Activated T-helper 1 cell treated with anti-CD3 and anti-CD28 coated beads, Interleukin-12 subunit alpha, Interleukin-12 subunit beta, Interleukin-2, Interleukin-4 antibody, amounts not matched to agents 30 ng/mL and 10 ng/mL and 1 ng/mL, durations not matched to agents 14 hours and 24 hours and 36 hours (primary cell): ENCODE measurements at regions of chr5 and their contacts with region 1.

Region 1: GRCh38 chr5:16666883-16667398 is 50.1 kb upstream of the RETREG1 start:
- DNase-seq: no peak
- H3K4me3 Mint-ChIP-seq: no peak overlapping the region
- H3K27ac Mint-ChIP-seq: no peak overlapping the region
- H3K4me1 Mint-ChIP-seq: no peaks in the 10 kb centered on the region
- H3K27me3 Mint-ChIP-seq: peaks cover 3% of the 10 kb centered on the region

Region 2: DNA sequence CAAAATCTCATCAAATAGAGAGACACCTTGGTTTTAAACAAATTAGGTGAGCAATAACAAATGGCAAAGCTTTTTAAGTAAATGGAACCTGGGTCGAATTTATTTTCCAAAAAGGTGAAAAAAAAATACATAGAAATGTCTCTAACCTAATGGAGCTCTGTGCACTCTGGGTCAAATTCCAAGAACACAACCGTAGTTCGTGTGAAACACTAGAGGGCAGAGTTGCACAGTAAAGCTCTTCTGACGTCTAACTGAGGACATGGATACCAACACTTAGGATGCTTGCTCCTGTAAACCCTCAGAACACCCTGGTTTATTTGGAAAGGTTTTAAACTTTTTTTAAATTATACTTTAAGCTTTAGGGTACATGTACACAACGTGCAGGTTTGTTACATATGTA is 506.2 kb before region 1 on chr5:
- intact Hi-C with region 1: loop called (anchors 2 kb)
- DNase-seq: peak; percentile 10
- H3K4me3 Mint-ChIP-seq: no peak overlapping the region
- H3K27ac Mint-ChIP-seq: no peak overlapping the region
- H3K4me1 Mint-ChIP-seq: no peaks in the 10 kb centered on the region
- H3K27me3 Mint-ChIP-seq: no peaks in the 10 kb centered on the region

Region 3: GRCh38 chr5:16489322-16489791 is 177.6 kb before region 1 on chr5:
- intact Hi-C with region 1: loop called (anchors 1 kb)
- DNase-seq: no peak
- H3K4me3 Mint-ChIP-seq: no peak overlapping the region
- H3K27ac Mint-ChIP-seq: no peak overlapping the region
- H3K4me1 Mint-ChIP-seq: peaks cover 12% of the 10 kb centered on the region
- H3K27me3 Mint-ChIP-seq: no peaks in the 10 kb centered on the region